Heart left ventricle (tissue), 16 donors: ENCODE measurements at regions of chr4 and their contacts with region 1.

Region 1: GRCh38 chr4:144115519-144115918 is 25.0 kb downstream of the GYPA start:
- DNase-seq: no peak
- ATAC-seq: no peak
- H3K4me3 ChIP-seq: no peak overlapping the region
- H3K27ac ChIP-seq: no peak overlapping the region
- H3K4me1 ChIP-seq: no peaks in the 10 kb centered on the region
- H3K27me3 ChIP-seq: no peaks in the 10 kb centered on the region
- CTCF ChIP-seq: no peak
- POLR2A ChIP-seq: no peak

Region 2: DNA sequence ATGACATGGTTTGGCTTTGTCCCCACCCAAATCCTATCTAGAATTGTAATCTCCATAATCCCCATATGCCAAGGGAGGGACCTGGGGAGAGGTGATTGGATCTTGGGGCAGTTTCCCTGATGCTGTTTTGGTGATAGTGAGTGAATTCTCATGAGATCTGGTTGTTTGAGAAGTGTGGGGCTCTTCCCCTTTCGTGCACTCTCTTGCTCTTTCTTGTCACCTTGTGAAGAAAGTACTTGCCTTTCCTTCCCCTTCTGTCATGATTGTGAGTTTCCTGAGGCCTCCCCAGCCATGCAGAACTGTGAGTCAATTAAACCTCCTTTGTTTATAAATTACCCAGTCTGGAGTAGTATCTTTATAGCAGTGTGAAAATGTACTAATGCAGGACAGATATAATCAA is 378.7 kb before region 1 on chr4:
- intact Hi-C with region 1: no loop called
- DNase-seq: no peak
- ATAC-seq: no peak
- H3K4me3 ChIP-seq: no peak overlapping the region
- H3K27ac ChIP-seq: no peak overlapping the region
- H3K4me1 ChIP-seq: no peaks in the 10 kb centered on the region
- H3K27me3 ChIP-seq: no peaks in the 10 kb centered on the region
- CTCF ChIP-seq: no peak
- POLR2A ChIP-seq: no peak

Region 3: GRCh38 chr4:143882892-143883291 is 232.6 kb before region 1 on chr4:
- intact Hi-C with region 1: loop called in 1 of 10 experiments (anchors 10 kb)
- DNase-seq: no peak
- ATAC-seq: no peak
- H3K4me3 ChIP-seq: no peak overlapping the region
- H3K27ac ChIP-seq: no peak overlapping the region
- H3K4me1 ChIP-seq: no peaks in the 10 kb centered on the region
- H3K27me3 ChIP-seq: no peaks in the 10 kb centered on the region
- CTCF ChIP-seq: no peak
- POLR2A ChIP-seq: no peak